H1 (cell line): ENCODE measurements at regions of chr6 and their contacts with region 1.

Region 1: GRCh38 chr6:27132532-27133280 is 114.8 kb upstream of the PRSS16 start:
- DNase-seq: peak; percentile 95 to 98
- H3K4me3 ChIP-seq: peak overlapping the region; percentile 89 to 98 (median 90)
- H3K27ac ChIP-seq: peak overlapping the region; percentile 96
- H3K4me1 ChIP-seq: peaks cover 0 to 5% (median 0%) of the 10 kb centered on the region in 4 experiments; a peak in 2 of 7 replicates
- H3K27me3 ChIP-seq: no peaks in the 10 kb centered on the region
- CTCF ChIP-seq: no peak
- EP300 ChIP-seq: no peak
- POLR2A ChIP-seq: peak; percentile 98 to 99
- RAD21 ChIP-seq: no peak

Region 2: GRCh38 chr6:26183581-26184366 is 948.9 kb before region 1 on chr6:
- CTCF ChIA-PET with region 1: no interaction called
- POLR2A ChIA-PET with region 1: interaction called, 27 read pairs
- DNase-seq: peak in 1 of 2 experiments; percentile 82
- H3K4me3 ChIP-seq: peak overlapping the region; percentile 45 to 73 (median 70)
- H3K27ac ChIP-seq: peak overlapping the region; percentile 97
- H3K4me1 ChIP-seq: peaks cover 0 to 17% (median 8%) of the 10 kb centered on the region in 4 experiments; a peak in 5 of 7 replicates
- H3K27me3 ChIP-seq: no peaks in the 10 kb centered on the region
- CTCF ChIP-seq: no peak
- EP300 ChIP-seq: no peak
- POLR2A ChIP-seq: peak; percentile 94 to 99
- RAD21 ChIP-seq: no peak

Region 3: DNA sequence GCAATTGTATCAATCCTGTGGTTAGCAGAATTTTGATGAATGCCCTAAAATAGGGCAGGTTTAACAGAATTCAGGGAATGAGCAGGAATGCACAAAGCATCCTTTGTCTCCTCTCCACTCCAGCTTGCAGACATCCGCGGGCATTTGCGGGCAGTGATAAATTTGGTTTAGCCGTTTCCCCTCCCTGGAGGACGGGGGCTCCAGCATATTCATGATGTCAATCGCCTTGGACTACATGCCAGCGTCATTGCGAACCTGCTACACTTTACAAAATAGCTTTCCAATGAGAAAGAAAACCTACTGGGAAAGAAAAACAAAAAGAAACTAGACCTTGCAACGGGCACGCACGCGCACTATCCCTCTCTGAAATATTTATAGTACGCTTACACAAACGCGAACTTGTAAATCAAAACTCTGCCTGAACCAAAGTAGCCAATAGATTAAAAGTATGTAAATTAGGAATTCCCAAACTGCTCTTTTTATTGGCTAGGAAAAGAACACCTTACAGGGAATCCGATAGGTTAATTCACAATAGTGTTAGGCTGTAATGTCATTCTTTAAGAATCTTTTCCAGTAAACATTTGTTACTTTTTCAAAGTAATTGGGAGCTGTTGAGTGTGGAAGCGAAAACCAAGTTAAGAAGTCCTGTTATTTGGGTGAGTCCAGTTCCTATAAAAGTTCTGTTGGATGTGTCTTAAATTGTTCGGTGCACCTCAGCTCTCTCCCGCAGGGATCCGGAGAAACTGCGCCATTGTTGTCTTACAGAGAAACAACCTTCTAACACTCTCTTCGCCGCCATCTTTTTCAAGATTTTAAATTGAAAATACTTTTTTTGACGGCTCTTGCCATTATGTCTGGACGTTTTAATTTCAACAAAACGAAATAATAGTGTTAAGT is 908.8 kb before region 1 on chr6:
- CTCF ChIA-PET with region 1: no interaction called
- POLR2A ChIA-PET with region 1: interaction called, 30 read pairs
- DNase-seq: no peak
- H3K4me3 ChIP-seq: peak overlapping the region; percentile 61 to 94 (median 76)
- H3K27ac ChIP-seq: peak overlapping the region; percentile 91
- H3K4me1 ChIP-seq: peaks cover 0 to 7% (median 3%) of the 10 kb centered on the region in 4 experiments; a peak in 5 of 7 replicates
- H3K27me3 ChIP-seq: no peaks in the 10 kb centered on the region
- CTCF ChIP-seq: no peak
- EP300 ChIP-seq: no peak
- POLR2A ChIP-seq: peak; percentile 48 to 76; a peak in 2 of 3 replicates
- RAD21 ChIP-seq: no peak

Region 4: GRCh38 chr6:27121640-27122039 is 11.1 kb before region 1 on chr6:
- CTCF ChIA-PET with region 1: interaction called, 5 read pairs
- POLR2A ChIA-PET with region 1: interaction called, 47 read pairs
- DNase-seq: no peak
- H3K4me3 ChIP-seq: no peak overlapping the region
- H3K27ac ChIP-seq: no peak overlapping the region
- H3K4me1 ChIP-seq: no peaks in the 10 kb centered on the region
- H3K27me3 ChIP-seq: no peaks in the 10 kb centered on the region
- CTCF ChIP-seq: no peak
- EP300 ChIP-seq: no peak
- POLR2A ChIP-seq: no peak
- RAD21 ChIP-seq: no peak

Region 5: DNA sequence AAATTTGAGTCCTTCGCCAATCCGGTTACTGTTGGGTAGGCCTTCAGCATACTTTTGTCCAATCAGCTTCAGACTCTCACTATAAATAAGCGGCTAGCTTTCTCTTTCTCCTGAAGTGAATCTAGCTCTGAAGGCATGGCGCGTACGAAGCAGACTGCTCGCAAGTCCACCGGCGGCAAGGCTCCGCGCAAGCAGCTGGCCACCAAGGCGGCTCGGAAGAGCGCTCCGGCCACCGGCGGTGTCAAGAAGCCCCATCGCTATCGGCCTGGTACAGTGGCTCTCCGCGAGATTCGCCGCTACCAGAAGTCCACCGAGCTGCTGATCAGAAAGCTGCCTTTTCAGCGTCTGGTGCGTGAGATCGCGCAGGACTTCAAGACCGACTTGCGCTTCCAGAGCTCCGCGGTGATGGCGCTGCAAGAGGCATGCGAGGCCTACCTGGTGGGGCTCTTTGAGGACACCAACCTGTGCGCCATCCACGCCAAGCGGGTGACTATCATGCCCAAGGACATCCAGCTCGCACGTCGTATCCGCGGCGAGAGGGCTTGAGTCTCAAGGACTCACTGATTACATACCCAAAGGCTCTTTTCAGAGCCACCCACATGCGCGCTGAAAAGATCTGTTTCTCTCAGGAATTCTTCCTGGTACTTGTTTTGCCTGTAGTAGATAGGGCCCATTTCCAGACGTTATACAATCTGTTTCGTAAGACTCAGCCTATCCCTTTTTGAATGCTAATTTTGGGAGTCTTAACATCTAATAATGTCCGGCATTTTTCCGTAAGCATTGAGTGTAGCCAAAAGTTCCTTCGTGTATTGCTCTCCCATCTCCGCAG is 677.4 kb after region 1 on chr6:
- CTCF ChIA-PET with region 1: no interaction called
- POLR2A ChIA-PET with region 1: interaction called, 587 read pairs
- DNase-seq: peak in 1 of 2 experiments; percentile 78
- H3K4me3 ChIP-seq: peak overlapping the region; percentile 78 to 96 (median 89)
- H3K27ac ChIP-seq: peak overlapping the region; percentile 84
- H3K4me1 ChIP-seq: peaks cover 0 to 6% (median 3%) of the 10 kb centered on the region in 4 experiments; a peak in 4 of 7 replicates
- H3K27me3 ChIP-seq: no peaks in the 10 kb centered on the region
- CTCF ChIP-seq: peak in 1 of 3 experiments; percentile 6; a peak in 1 of 4 replicates
- EP300 ChIP-seq: no peak
- POLR2A ChIP-seq: peak; percentile 98 to 100
- RAD21 ChIP-seq: no peak

Region 6: GRCh38 chr6:27871924-27872638 is 739.4 kb after region 1 on chr6:
- CTCF ChIA-PET with region 1: no interaction called
- POLR2A ChIA-PET with region 1: interaction called, 61 read pairs
- DNase-seq: peak in 1 of 2 experiments; percentile 89
- H3K4me3 ChIP-seq: peak overlapping the region; percentile 61 to 73 (median 67)
- H3K27ac ChIP-seq: peak overlapping the region; percentile 96
- H3K4me1 ChIP-seq: peaks cover 0 to 16% (median 9%) of the 10 kb centered on the region in 4 experiments; a peak in 5 of 7 replicates
- H3K27me3 ChIP-seq: no peaks in the 10 kb centered on the region
- CTCF ChIP-seq: peak in 2 of 3 experiments; percentile 22 to 26; a peak in 3 of 4 replicates
- EP300 ChIP-seq: no peak; a peak in 1 of 3 replicates
- POLR2A ChIP-seq: peak; percentile 97 to 98
- RAD21 ChIP-seq: no peak